Posterior vena cava (tissue), 2 donors: ENCODE measurements at regions of chr10 and their contacts with region 1.

Region 1: DNA sequence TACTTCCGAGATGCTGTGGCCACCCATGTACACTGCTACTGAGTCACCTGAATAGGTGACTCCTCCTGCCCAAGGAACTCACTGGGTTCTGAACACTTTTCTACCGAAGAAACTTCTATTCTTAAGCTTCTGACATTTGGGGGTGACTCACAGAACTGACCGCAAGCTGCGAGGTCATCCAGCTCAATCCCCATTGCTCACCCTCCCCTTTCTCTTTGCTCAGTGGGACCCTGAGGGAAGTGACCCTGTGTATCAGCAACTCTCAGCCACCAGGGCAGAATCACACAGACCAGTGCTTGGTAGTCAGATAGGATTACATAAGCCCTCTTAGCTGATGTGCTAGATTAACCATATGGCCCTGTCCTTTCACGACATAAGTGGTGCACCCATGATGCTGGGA is 46.3 kb downstream of the INSYN2A start:
- DNase-seq: no peak

Region 2: DNA sequence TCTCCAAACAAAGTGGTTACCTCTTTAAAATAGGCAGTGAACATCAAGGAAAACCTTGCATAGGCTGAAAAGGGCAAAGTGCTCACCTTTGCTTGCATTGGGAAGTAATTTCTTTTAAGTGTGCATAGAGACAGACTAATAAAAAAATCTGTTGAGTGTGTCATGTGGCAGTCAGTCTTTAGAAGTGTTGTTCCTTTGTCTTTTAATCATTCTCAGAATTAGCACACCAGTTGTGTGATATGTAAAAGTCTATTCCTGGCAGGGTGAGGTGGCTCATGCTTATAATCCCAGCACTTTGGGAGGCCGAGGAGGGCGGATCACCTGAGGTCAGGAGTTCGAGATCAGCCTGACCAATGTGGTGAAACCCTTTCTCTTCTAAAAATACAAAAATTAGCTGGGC is 70.7 kb before region 1 on chr10:
- intact Hi-C with region 1: loop called in 1 of 2 experiments (anchors 2 kb)
- DNase-seq: no peak

Region 3: GRCh38 chr10:127720142-127720541 is 570.0 kb after region 1 on chr10:
- intact Hi-C with region 1: loop called in 1 of 2 experiments (anchors 10 kb)
- DNase-seq: no peak

Region 4: GRCh38 chr10:128727114-128727513 is 1577.0 kb after region 1 on chr10:
- intact Hi-C with region 1: no loop called
- DNase-seq: no peak